OCI-LY7 (cell line): ENCODE measurements at regions of chr2 and their contacts with region 1.

Region 1: GRCh38 chr2:224492531-224492930 is 90.6 kb upstream of the FAM124B start:
- DNase-seq: peak; percentile 45
- H3K4me3 ChIP-seq: peak overlapping the region; percentile 8
- H3K27ac ChIP-seq: peak overlapping the region; percentile 100
- H3K4me1 ChIP-seq: peaks cover 58% of the 10 kb centered on the region
- CTCF ChIP-seq: no peak

Region 2: DNA sequence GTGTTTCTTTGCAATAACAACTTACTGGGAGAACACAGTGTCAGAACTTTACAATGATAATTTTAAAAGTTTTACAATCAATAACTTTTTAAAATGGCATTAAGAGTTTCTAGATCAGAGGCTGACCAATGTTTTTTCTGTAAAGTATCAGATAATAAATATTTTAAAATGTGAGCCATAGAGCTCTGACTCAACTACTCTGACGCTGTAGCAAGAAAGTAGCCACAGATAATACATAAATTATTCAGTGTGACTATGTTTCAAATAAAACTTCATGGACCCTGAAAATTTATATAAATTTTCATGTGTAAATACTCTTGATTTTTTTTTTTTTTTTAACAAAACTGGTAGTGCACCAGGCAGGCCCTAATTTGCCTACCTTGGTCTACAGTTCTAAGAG is 15.3 kb after region 1 on chr2:
- CTCF ChIA-PET with region 1: no interaction called
- POLR2A ChIA-PET with region 1: interaction called, 14 read pairs
- intact Hi-C with region 1: no loop called
- DNase-seq: no peak
- H3K4me3 ChIP-seq: no peak overlapping the region
- H3K27ac ChIP-seq: no peak overlapping the region
- H3K4me1 ChIP-seq: no peaks in the 10 kb centered on the region
- CTCF ChIP-seq: no peak

Region 3: GRCh38 chr2:224513991-224514390 is 21.5 kb after region 1 on chr2:
- CTCF ChIA-PET with region 1: no interaction called
- POLR2A ChIA-PET with region 1: interaction called, 37 read pairs
- intact Hi-C with region 1: no loop called
- DNase-seq: no peak
- H3K4me3 ChIP-seq: no peak overlapping the region
- H3K27ac ChIP-seq: no peak overlapping the region
- H3K4me1 ChIP-seq: peaks cover 20% of the 10 kb centered on the region
- CTCF ChIP-seq: no peak

Region 4: GRCh38 chr2:224598669-224599068 is 106.1 kb after region 1 on chr2:
- CTCF ChIA-PET with region 1: no interaction called
- POLR2A ChIA-PET with region 1: no interaction called
- intact Hi-C with region 1: no loop called
- DNase-seq: no peak
- H3K4me3 ChIP-seq: no peak overlapping the region
- H3K27ac ChIP-seq: no peak overlapping the region
- H3K4me1 ChIP-seq: peaks cover 26% of the 10 kb centered on the region
- CTCF ChIP-seq: no peak